Pancreas (tissue), 10 donors: ENCODE measurements at regions of chr16 and their contacts with region 1.

Region 1: DNA sequence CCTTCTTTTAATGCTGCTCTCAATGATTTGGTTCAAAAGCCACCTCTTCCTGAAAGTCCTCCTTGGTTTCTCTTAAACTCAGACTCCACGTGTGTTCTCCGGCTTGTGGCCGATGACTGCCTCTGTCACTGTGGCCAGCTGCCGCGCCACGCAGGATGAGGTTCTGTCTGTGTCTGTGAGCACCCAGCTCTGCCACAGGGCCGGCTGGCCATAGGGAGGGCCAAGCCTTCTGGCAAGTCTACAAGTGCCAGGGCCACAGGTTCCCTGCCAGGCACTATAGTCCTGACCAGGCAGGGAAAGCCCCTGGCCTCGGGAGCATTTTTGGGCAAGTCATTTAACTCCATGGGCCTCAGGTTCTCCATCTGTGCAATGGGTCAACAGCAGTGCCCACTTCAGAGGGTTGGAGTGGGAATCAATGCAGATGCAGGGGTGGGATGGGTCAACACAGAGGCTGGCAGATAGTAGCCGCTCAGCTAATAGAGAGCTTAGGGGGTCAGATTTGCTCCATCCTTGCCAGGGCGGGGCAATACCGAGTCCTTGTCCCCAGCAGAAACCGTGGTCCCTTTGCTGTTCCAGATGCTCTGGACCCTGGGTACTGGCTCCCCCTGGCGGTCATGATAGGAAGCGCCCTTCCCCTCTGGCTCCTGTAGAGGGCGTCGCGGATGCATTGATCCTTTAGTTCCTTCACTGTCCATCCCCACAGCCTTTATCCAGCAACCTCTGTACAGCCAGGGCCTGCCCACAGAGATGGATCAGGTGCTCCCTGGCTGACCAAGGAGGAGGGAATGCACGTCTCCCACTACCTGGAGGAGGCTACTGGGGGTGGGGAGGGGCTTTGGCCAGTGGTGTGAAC is 19.3 kb upstream of the ADGRG3 start:
- DNase-seq: peak; percentile 61 to 93 (median 85)
- ATAC-seq: peak; percentile 69 to 94 (median 90)
- H3K4me3 ChIP-seq: no peak overlapping the region
- H3K27ac ChIP-seq: peak overlapping the region in 2 of 4 donors; percentile 2 to 13
- H3K4me1 ChIP-seq: no peaks in the 10 kb centered on the region
- H3K27me3 ChIP-seq: no peaks in the 10 kb centered on the region
- CTCF ChIP-seq: peak; percentile 100

Region 2: GRCh38 chr16:57591086-57591869 is 57.5 kb before region 1 on chr16:
- intact Hi-C with region 1: loop called (anchors 5 to 10 kb)
- DNase-seq: peak; percentile 59 to 84 (median 78)
- ATAC-seq: peak; percentile 95 to 98 (median 96)
- H3K4me3 ChIP-seq: no peak overlapping the region
- H3K27ac ChIP-seq: no peak overlapping the region
- H3K4me1 ChIP-seq: no peaks in the 10 kb centered on the region
- H3K27me3 ChIP-seq: no peaks in the 10 kb centered on the region
- CTCF ChIP-seq: peak; percentile 71 to 92 (median 83)

Region 3: DNA sequence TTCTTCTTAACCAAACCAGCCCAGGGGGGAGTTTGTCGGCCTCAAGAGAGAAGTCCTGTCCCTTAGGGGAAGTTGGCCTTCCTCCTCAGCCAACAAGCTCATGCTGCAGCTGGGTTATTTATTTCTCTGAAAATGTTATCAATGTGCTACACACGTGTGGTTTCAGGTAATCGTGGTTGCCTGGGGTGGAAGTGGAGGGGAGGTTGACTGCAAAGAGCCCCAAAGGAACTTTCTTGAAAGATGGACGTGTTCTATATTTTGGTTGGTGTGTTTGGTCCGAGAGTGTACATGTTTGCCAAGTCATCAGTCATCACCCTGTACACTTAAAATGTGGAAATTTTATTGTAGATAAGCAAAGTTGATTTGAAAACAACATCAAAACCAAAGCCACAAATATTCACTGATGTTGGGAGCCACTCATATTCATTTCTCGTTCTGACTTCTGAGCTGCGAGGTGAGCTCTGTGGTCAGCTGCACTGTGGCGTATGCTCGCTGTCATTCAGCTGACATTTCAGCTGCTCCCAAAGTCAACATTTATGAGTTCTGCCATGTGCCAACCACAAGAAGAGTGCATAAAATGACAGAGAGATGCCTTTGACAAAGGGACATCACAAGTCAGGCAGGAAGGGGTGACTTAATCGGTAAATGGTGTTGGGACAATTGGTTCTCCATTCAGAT is 46.9 kb before region 1 on chr16:
- intact Hi-C with region 1: loop called in 2 of 3 experiments (anchors 2 to 10 kb)
- DNase-seq: peak in 1 of 6 donors; percentile 13
- ATAC-seq: peak in 3 of 4 donors; percentile 9 to 36 (median 18)
- H3K4me3 ChIP-seq: no peak overlapping the region
- H3K27ac ChIP-seq: peak overlapping the region in 3 of 4 donors; percentile 39 to 62 (median 62)
- H3K4me1 ChIP-seq: peaks cover 26 to 31% (median 31%) of the 10 kb centered on the region in 3 donors
- H3K27me3 ChIP-seq: no peaks in the 10 kb centered on the region
- CTCF ChIP-seq: no peak

Region 4: GRCh38 chr16:57863434-57864160 is 214.8 kb after region 1 on chr16:
- intact Hi-C with region 1: no loop called
- DNase-seq: peak; percentile 60 to 75 (median 70)
- ATAC-seq: peak; percentile 93 to 98 (median 97)
- H3K4me3 ChIP-seq: no peak overlapping the region
- H3K27ac ChIP-seq: peak overlapping the region in 2 of 4 donors; percentile 6 to 36
- H3K4me1 ChIP-seq: peaks cover 0 to 6% (median 0%) of the 10 kb centered on the region in 3 donors
- H3K27me3 ChIP-seq: no peaks in the 10 kb centered on the region
- CTCF ChIP-seq: peak in 3 of 4 donors; percentile 24 to 42 (median 32)